Mammary epithelial cell (primary cell): ENCODE measurements at regions of chr17 and their contacts with region 1.

Region 1: GRCh38 chr17:36463916-36464315 is 22.6 kb upstream of the ZNHIT3 start:
- DNase-seq: peak; percentile 89
- H3K4me3 ChIP-seq: no peak overlapping the region
- H3K27ac ChIP-seq: no peak overlapping the region
- H3K4me1 ChIP-seq: peaks cover 3% of the 10 kb centered on the region
- H3K27me3 ChIP-seq: peaks cover 5% of the 10 kb centered on the region
- CTCF ChIP-seq: peak in 1 of 2 donors; percentile 29

Region 2: GRCh38 chr17:36509272-36509985 is 45.5 kb after region 1 on chr17:
- CTCF ChIA-PET with region 1: no interaction called
- dilution Hi-C with region 1: no loop called
- in situ Hi-C with region 1: no loop called
- intact Hi-C with region 1: loop called (anchors 2 kb)
- DNase-seq: no peak
- H3K4me3 ChIP-seq: no peak overlapping the region
- H3K27ac ChIP-seq: no peak overlapping the region
- H3K4me1 ChIP-seq: no peaks in the 10 kb centered on the region
- H3K27me3 ChIP-seq: no peaks in the 10 kb centered on the region
- CTCF ChIP-seq: no peak